Mammary epithelial cell (primary cell): ENCODE measurements at regions of chr20 and their contacts with region 1.

Region 1: DNA sequence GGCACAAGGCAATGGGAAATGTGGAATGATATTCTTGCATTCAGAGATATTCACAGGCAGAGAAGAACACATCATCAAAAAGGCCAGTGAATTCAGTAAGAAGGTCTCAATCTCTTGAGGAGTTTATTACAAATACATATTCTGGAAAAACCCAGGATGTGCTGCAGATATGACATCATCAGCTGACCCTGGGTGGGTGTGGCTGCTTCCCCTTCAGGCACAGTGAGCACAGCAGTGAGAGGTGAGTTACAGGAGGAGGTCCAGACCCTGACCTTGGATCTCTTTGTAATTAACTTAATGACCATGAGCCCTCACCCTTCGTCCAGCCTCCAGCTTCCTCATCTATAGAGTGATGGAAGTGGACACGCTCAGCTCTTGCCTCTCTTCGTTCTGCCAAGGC is 147.5 kb upstream of the SYNDIG1 start:
- DNase-seq: peak; percentile 31
- H3K4me3 ChIP-seq: no peak overlapping the region
- H3K27ac ChIP-seq: no peak overlapping the region
- H3K4me1 ChIP-seq: peaks cover 4% of the 10 kb centered on the region
- H3K27me3 ChIP-seq: no peaks in the 10 kb centered on the region
- CTCF ChIP-seq: no peak

Region 2: DNA sequence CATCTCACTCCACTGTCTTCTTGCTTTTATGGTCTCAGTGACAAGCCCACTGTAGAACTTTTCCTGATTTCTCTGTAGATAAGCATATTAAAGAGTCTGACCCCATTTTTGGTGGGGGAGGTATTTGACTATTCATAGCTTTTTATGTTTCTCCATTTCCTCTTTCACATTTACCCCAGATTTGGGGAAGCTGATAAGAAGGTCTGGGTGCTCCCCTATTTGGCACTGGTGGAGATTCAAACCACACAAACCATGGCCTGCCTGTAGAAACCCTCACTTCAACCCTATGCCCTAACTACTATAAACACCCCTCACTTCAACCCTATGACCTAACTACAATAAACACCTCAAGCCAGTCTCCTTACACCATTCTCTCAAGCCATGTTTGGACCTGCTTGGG is 48.7 kb before region 1 on chr20:
- CTCF ChIA-PET with region 1: no interaction called
- dilution Hi-C with region 1: loop called (anchors 5 kb)
- in situ Hi-C with region 1: no loop called
- intact Hi-C with region 1: no loop called
- DNase-seq: no peak
- H3K4me3 ChIP-seq: no peak overlapping the region
- H3K27ac ChIP-seq: no peak overlapping the region
- H3K4me1 ChIP-seq: no peaks in the 10 kb centered on the region
- H3K27me3 ChIP-seq: no peaks in the 10 kb centered on the region
- CTCF ChIP-seq: no peak

Region 3: GRCh38 chr20:25129908-25130307 is 807.9 kb after region 1 on chr20:
- CTCF ChIA-PET with region 1: no interaction called
- dilution Hi-C with region 1: no loop called
- in situ Hi-C with region 1: no loop called
- intact Hi-C with region 1: no loop called
- DNase-seq: no peak
- H3K4me3 ChIP-seq: no peak overlapping the region
- H3K27ac ChIP-seq: no peak overlapping the region
- H3K4me1 ChIP-seq: no peaks in the 10 kb centered on the region
- H3K27me3 ChIP-seq: no peaks in the 10 kb centered on the region
- CTCF ChIP-seq: no peak